Thyroid gland (tissue), 4 donors: ENCODE measurements at regions of chr15 and their contacts with region 1.

Region 1: DNA sequence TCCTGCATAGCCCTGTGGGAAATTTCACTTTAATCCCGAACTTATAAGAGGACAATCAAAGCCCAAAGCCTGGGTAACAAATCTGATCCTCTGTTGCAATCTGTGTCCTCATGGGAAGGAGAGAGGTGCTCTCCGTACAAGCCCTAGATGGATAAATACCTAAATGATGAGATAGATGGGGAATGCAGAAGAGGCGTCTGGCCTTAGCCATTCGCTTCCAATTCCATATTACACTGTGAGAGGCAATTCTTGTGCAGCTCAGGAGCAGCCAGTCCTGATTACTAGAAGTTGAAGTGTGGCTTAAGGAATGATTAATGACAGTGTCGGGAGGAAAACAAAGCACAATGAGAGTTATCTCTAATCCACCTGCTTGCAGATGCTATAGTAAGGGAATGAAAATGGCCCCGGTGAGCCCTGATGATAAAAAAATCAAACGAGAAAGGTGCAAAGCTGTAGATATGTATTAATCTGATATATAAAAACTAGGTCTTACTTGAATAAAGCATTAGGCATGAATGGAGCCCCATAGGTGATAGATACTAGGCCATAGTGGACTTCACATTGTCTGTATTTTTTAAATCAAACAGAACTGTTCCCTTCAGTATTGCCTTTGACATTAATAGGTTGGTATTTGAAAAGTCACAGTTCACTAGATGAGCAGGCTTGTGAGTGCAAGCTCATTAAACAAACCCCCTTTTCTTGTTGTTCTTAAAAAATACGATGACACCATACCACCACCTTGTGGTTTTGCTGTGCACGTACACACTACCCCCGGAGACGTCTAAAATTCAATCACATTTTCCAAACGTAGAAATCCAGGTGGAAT is 54.2 kb upstream of the TMCO5A start:
- DNase-seq: peak; percentile 43 to 51
- H3K4me3 ChIP-seq: no peak overlapping the region
- H3K27ac ChIP-seq: no peak overlapping the region
- H3K4me1 ChIP-seq: peaks cover 5 to 18% of the 10 kb centered on the region in 2 donors
- H3K27me3 ChIP-seq: no peaks in the 10 kb centered on the region
- CTCF ChIP-seq: peak; percentile 35 to 97 (median 84)
- POLR2A ChIP-seq: no peak

Region 2: DNA sequence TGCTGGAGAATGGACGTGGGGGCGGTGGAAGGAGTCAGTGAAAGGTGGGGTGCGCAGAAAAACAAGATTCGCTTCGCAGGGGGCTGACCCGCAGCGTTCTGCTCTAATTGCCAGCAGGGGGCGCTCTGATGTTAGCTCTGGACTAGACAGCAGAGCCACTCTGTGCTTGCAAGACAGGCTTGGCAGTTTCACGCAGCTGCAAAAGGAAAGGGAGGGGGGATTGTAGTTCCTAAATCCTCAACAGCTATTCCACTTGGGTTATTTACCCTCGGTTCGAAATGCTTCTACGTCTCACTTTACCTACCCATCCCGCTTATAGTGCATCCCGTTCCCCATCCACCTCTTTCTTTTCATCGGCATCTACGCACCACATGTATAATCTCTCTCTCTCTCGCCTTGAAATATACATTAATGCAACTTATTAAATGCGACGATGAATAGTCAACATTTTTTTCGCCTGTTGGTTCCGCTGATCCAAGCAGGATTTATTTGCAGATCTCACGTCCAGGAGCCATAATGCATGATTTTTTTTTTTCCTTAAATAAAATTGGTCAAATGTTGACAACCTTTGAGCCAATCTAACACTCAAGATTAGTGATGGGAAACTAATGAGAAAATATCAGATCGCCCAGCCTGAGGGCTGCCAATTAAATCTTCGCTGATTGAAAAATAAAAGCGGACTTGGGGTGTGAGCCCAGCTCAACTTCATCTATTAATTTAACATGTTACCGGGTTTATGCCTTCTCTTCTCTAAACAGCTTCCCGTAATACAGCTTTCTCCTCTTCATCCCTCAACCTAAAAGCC is 996.3 kb before region 1 on chr15:
- intact Hi-C with region 1: loop called (anchors 5 kb)
- DNase-seq: peak; percentile 72 to 83
- H3K4me3 ChIP-seq: no peak overlapping the region
- H3K27ac ChIP-seq: no peak overlapping the region
- H3K4me1 ChIP-seq: peaks cover 8 to 28% of the 10 kb centered on the region in 2 donors
- H3K27me3 ChIP-seq: peaks cover 52% of the 10 kb centered on the region
- CTCF ChIP-seq: peak; percentile 62 to 81 (median 68)
- POLR2A ChIP-seq: no peak

Region 3: DNA sequence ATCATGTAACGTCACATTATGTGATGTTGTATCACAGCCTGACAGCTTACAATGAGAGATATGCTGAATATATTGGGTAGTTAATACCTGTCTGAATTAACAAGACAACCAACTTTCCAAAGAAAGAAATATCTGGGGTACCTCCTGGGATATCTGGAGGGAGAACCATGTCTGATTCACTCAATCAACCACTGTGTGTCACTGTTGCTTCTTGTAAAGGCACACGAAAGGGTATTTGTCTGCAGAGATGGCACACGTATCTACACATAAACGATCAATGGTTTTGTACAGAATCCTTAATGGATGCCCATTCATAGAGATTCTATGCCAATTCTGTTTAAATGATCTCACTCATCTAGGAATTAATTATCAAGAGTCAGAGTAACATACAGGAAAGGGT is 197.9 kb before region 1 on chr15:
- intact Hi-C with region 1: loop called (anchors 10 kb)
- DNase-seq: no peak
- H3K4me3 ChIP-seq: no peak overlapping the region
- H3K27ac ChIP-seq: no peak overlapping the region
- H3K4me1 ChIP-seq: no peaks in the 10 kb centered on the region
- H3K27me3 ChIP-seq: no peaks in the 10 kb centered on the region
- CTCF ChIP-seq: peak in 3 of 6 experiments; percentile 21 to 36 (median 34)
- POLR2A ChIP-seq: no peak

Region 4: GRCh38 chr15:37793851-37794250 is 86.4 kb before region 1 on chr15:
- intact Hi-C with region 1: no loop called
- DNase-seq: no peak
- H3K4me3 ChIP-seq: no peak overlapping the region
- H3K27ac ChIP-seq: no peak overlapping the region
- H3K4me1 ChIP-seq: peaks cover 13 to 16% of the 10 kb centered on the region in 2 donors
- H3K27me3 ChIP-seq: no peaks in the 10 kb centered on the region
- CTCF ChIP-seq: no peak
- POLR2A ChIP-seq: no peak

Region 5: DNA sequence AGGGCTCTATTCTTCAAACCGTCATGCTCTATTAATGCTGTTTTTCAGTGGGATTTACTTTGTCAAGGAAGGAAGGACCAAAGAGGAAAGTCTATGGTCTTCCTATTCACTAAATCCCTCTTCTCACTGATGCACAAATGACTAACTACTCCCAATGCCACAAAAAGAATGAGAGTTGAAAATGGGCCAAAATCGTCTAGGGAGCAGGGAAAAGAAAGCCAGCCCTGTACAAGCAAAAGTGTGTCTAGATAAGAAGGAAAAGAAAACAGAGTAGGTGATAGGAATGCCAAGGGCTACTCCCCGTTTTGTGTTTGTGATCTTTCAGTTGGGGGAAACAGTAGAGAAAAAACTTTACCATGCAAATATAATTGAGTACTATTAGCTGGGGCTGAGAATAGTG is 42.9 kb before region 1 on chr15:
- intact Hi-C with region 1: no loop called
- DNase-seq: no peak
- H3K4me3 ChIP-seq: no peak overlapping the region
- H3K27ac ChIP-seq: peak overlapping the region in 1 of 3 donors; percentile 13
- H3K4me1 ChIP-seq: peaks cover 10 to 12% of the 10 kb centered on the region in 2 donors
- H3K27me3 ChIP-seq: no peaks in the 10 kb centered on the region
- CTCF ChIP-seq: no peak
- POLR2A ChIP-seq: no peak